HEK293 (cell line): ENCODE measurements at regions of chr17 and their contacts with region 1.

Region 1: DNA sequence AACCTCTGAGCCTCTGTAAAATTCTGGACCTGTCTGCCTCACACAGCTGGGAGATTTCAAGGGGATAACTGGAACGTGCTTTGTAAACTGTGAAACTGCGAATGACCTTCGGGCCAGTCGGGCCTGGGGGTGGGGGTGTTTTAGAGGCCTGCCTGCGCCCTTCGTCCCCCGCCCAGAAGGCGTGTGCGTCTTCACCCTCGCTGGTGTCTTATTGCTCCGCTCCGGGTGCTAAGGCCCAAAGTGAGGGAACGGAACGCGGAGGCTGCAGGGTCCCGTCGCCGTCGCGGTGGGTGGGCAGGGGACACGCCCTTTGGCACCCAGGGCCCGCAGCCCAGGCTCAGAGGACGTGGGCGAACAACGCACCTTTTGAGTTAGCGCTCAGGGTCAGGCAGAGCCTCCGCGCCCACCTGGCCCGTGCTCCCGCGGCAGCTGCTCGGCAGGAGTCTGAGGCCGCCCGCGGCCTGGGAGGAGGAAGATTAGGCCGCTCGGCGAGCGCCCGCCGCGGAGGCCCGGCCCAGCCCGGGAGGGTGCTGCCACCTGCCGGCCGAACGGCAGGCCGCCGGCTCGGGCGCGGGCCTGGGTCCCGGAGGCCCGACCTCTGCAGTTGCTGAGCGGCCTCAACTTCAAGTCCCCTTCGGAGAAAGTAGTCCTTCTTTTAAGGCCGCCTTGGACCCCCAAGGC is 29.7 kb downstream of the DCAKD start:
- H3K4me3 ChIP-seq: peak overlapping the region; percentile 3; the same call in 1 of the 2 replicates
- H3K27ac ChIP-seq: no peak overlapping the region; the same call in 1 of the 2 replicates
- H3K4me1 ChIP-seq: peaks cover 3% of the 10 kb centered on the region; the same call in 1 of the 2 replicates
- CTCF ChIP-seq: 0 out of 2 replicates have a peak, but pooled peaks have one; percentile 28

Region 2: GRCh38 chr17:44664867-44665266 is 356.9 kb before region 1 on chr17:
- CTCF ChIA-PET with region 1: no interaction called
- POLR2A ChIA-PET with region 1: no interaction called
- H3K4me3 ChIP-seq: no peak overlapping the region
- H3K27ac ChIP-seq: no peak overlapping the region
- H3K4me1 ChIP-seq: no peaks in the 10 kb centered on the region
- CTCF ChIP-seq: no peak

Region 3: DNA sequence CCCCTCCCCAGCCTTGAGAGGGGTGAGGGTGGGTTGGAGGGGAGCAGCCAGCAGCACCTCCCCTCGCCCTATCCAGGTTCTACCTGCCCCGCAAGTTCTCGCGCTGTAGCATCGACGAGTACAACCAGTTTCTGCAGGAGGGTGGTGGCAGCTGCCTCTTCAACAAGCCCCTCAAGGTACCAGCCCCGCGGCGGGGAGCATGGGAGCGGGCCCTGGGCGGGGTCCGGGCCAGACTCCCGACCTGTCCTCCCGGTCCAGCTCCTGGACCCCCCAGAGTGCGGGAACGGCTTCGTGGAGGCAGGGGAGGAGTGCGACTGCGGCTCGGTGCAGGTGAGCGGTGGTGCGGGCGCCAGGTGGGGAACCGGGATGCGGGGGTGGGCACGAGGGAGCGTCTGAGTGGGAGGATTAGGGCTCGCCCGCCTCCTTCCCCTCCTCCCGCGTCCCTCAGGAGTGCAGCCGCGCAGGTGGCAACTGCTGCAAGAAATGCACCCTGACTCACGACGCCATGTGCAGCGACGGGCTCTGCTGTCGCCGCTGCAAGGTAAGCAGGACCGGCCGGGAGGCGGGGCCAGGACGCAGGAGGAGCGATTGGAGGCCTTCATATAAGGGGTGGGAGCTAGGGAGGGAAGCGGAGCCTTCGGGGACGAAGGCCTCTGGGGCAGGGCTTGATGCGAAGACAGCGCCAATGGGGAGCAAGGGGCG is 246.5 kb before region 1 on chr17:
- CTCF ChIA-PET with region 1: interaction called, 14 read pairs
- POLR2A ChIA-PET with region 1: interaction called, 3 read pairs
- H3K4me3 ChIP-seq: peak overlapping the region; percentile 58
- H3K27ac ChIP-seq: peak overlapping the region; percentile 25; the same call in 1 of the 2 replicates
- H3K4me1 ChIP-seq: no peaks in the 10 kb centered on the region
- CTCF ChIP-seq: peak; percentile 36; the same call in 1 of the 2 replicates

Region 4: DNA sequence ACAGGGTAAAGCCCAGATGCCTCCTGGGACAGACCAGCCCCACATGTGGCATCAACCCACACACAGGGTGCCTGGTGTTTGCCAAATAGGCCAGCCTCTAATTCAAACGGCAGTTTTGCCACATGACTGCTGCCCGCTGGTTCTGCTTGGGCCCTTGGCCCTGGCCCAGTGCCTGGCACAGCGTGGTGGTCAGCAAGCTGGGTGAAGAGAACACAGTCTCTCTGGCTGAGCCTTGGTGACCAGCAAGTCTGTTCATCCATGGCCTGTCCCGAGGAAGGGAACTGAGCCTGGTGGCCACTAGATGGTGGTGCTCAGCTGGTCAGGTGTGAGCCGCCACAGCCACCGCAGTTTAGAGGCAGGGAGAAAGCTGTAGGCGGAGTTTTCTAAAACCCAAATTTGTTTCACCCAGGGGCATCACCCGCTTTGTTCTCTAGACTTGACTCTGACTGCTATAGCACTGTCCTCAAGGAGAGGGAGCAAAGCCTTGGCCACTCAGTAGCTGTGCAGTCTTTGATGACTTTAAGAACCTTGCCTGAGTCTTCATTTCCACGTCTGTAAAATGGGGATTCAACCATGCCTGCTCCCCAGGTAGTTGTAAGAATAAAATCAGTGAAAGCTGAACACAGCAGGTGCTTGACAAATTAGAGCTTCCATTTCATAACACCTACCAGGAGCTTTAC is 101.7 kb before region 1 on chr17:
- CTCF ChIA-PET with region 1: interaction called, 296 read pairs
- POLR2A ChIA-PET with region 1: interaction called, 7 read pairs
- H3K4me3 ChIP-seq: no peak overlapping the region
- H3K27ac ChIP-seq: no peak overlapping the region
- H3K4me1 ChIP-seq: no peaks in the 10 kb centered on the region; the same call in 1 of the 2 replicates
- CTCF ChIP-seq: peak; percentile 87

Region 5: GRCh38 chr17:44941712-44942331 is 79.9 kb before region 1 on chr17:
- CTCF ChIA-PET with region 1: interaction called, 34 read pairs
- POLR2A ChIA-PET with region 1: no interaction called
- H3K4me3 ChIP-seq: no peak overlapping the region
- H3K27ac ChIP-seq: peak overlapping the region; percentile 43
- H3K4me1 ChIP-seq: peaks cover 4% of the 10 kb centered on the region; the same call in 1 of the 2 replicates
- CTCF ChIP-seq: no peak

Region 6: DNA sequence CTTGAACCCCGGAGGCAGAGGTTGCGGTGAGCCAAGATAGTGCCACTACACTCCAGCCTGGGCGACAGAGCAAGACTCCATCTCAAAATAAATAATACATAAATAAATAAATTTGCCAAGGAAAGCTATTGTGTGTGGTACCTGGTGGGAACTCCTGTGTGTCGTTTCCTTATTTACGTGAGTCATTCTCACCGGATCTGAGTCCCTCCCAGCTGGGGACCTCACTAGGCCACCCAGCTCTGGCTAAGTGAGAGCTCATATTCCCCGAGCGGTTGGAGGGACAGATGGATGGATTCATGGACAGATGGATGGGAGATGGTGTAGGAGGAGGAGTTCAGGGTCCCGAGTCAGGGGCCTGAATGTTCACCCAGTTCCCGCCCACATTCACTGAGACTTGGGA is 30.8 kb before region 1 on chr17:
- CTCF ChIA-PET with region 1: interaction called, 28 read pairs
- POLR2A ChIA-PET with region 1: no interaction called
- H3K4me3 ChIP-seq: no peak overlapping the region
- H3K27ac ChIP-seq: no peak overlapping the region
- H3K4me1 ChIP-seq: no peaks in the 10 kb centered on the region
- CTCF ChIP-seq: no peak

Region 7: GRCh38 chr17:45098869-45099616 is 77.3 kb after region 1 on chr17:
- CTCF ChIA-PET with region 1: interaction called, 14 read pairs
- POLR2A ChIA-PET with region 1: no interaction called
- H3K4me3 ChIP-seq: no peak overlapping the region
- H3K27ac ChIP-seq: no peak overlapping the region
- H3K4me1 ChIP-seq: no peaks in the 10 kb centered on the region
- CTCF ChIP-seq: peak; percentile 88

Region 8: GRCh38 chr17:45148183-45149036 is 126.7 kb after region 1 on chr17 and contains the start of gene HEXIM1:
- CTCF ChIA-PET with region 1: no interaction called
- POLR2A ChIA-PET with region 1: no interaction called
- H3K4me3 ChIP-seq: peak within 1 kb of the TSS; percentile 72
- H3K27ac ChIP-seq: peak within 1 kb of the TSS; percentile 92
- H3K4me1 ChIP-seq: peaks cover 10% of the 10 kb centered on the region; the same call in 1 of the 2 replicates
- CTCF ChIP-seq: peak; percentile 40; the same call in 1 of the 2 replicates